ENCODE measurements at regions of chr6 and their contacts with region 1.

Region 1: GRCh38 chr6:137641474-137642077 is 147.4 kb upstream of the OLIG3 start:
- DNase-seq: peak; percentile 55
- CTCF ChIP-seq: peak; percentile 66

Region 2: GRCh38 chr6:137089305-137089704 is 552.3 kb before region 1 on chr6:
- in situ Hi-C with region 1: loop called (anchors 10 kb)
- DNase-seq: no peak
- CTCF ChIP-seq: no peak

Region 3: GRCh38 chr6:137291441-137291840 is 350.1 kb before region 1 on chr6:
- in situ Hi-C with region 1: loop called (anchors 25 kb)
- DNase-seq: no peak
- CTCF ChIP-seq: no peak

Region 4: GRCh38 chr6:137363805-137364138 is 277.8 kb before region 1 on chr6:
- in situ Hi-C with region 1: no loop called
- DNase-seq: peak; percentile 24
- CTCF ChIP-seq: no peak